CD4-positive, alpha-beta memory T cell (primary cell): ENCODE measurements at regions of chr5 and their contacts with region 1.

Region 1: GRCh38 chr5:32232441-32233219 is 58.5 kb upstream of the GOLPH3 start:
- DNase-seq: peak; percentile 65 to 69 (median 67)
- H3K4me3 ChIP-seq: no peak overlapping the region
- H3K4me3 Mint-ChIP-seq: no peak overlapping the region
- H3K27ac ChIP-seq: no peak overlapping the region
- H3K27ac Mint-ChIP-seq: peak overlapping the region in 5 of 7 donors; percentile 24 to 89 (median 73)
- H3K4me1 ChIP-seq: no peaks in the 10 kb centered on the region
- H3K4me1 Mint-ChIP-seq: peaks cover 0 to 7% (median 4%) of the 10 kb centered on the region in 4 donors
- H3K27me3 ChIP-seq: no peaks in the 10 kb centered on the region
- H3K27me3 Mint-ChIP-seq: no peaks in the 10 kb centered on the region

Region 2: DNA sequence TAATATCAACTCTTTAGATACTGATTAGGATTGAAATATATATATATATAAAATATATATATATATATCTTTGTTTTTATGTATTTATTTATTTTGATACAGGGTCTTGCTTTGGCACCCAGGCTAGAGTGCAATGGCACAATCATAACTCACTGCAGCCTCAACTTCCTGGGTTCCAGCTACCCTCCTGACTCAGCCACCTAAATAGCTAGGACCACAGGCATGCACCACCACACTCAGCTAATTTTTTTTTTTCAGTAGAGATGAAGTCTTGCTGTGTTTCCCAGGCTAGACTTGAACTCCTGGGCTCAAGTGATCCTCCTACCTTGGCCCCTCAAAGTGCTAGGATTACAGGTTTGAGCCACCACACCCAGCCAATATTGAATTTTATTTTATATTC is 1059.7 kb before region 1 on chr5:
- CTCF ChIA-PET with region 1: no interaction called
- POLR2A ChIA-PET with region 1: no interaction called
- intact Hi-C with region 1: no loop called
- DNase-seq: no peak
- H3K4me3 ChIP-seq: no peak overlapping the region
- H3K4me3 Mint-ChIP-seq: no peak overlapping the region
- H3K27ac ChIP-seq: no peak overlapping the region
- H3K27ac Mint-ChIP-seq: no peak overlapping the region
- H3K4me1 ChIP-seq: no peaks in the 10 kb centered on the region
- H3K4me1 Mint-ChIP-seq: no peaks in the 10 kb centered on the region
- H3K27me3 ChIP-seq: no peaks in the 10 kb centered on the region
- H3K27me3 Mint-ChIP-seq: no peaks in the 10 kb centered on the region

Region 3: DNA sequence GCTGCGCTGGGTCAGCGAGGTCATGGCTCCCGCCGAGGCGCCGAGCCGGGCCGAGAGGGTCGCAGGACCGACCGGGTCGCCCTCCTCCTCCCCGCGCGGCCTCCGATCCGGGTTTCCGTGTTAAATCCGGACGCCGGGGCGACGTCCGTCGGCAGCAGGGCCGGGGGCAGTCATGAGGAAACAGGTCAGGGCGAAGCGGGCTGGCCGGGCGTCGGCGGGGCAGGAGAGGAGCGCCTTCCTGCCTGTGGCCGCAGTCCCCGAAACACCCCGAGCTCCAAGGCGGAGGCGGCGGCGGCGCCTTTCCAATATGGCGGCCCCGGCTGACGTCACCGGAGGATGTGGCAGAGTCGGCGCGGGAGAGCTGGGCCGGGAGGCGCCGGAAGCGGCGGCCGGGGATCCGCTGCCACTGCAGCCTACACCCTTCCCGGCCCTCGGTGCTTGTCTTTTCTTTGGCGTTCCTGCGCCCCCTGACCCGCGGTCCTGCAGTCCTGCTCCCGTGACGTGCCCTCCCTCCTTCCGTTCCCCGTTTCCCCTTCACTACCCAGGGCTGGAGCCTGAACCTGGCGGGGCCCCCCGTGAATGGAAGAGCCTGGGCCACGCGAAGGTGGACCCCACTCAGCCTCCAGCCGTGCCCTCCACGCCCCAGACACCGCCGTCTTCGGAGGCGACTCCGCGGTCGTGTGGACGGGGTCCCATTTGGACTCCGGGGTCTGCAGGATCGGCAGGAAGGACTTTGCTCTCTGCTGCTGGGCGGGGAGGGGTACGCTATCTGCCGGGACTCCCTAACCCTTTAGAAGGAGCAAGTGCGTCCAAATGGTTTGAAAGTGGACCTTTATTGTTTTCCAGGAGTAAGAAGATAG is 58.4 kb before region 1 on chr5 and contains the start of gene GOLPH3:
- CTCF ChIA-PET with region 1: interaction called, 3 read pairs
- POLR2A ChIA-PET with region 1: interaction called, 12 read pairs
- intact Hi-C with region 1: loop called (anchors 5 kb)
- DNase-seq: peak; percentile 89 to 94 (median 91)
- H3K4me3 ChIP-seq: peak within 1 kb of the TSS; percentile 62 to 69
- H3K4me3 Mint-ChIP-seq: peak within 1 kb of the TSS; percentile 94 to 99 (median 98)
- H3K27ac ChIP-seq: peak within 1 kb of the TSS; percentile 98
- H3K27ac Mint-ChIP-seq: peak within 1 kb of the TSS; percentile 93 to 99 (median 99)
- H3K4me1 ChIP-seq: peaks cover 31% of the 10 kb centered on the region
- H3K4me1 Mint-ChIP-seq: peaks cover 24 to 52% (median 31%) of the 10 kb centered on the region in 4 donors
- H3K27me3 ChIP-seq: no peaks in the 10 kb centered on the region
- H3K27me3 Mint-ChIP-seq: peaks cover 2 to 7% of the 10 kb centered on the region in 2 donors
- total RNA-seq, gene GOLPH3: 67.4 to 74.5 TPM

Region 4: DNA sequence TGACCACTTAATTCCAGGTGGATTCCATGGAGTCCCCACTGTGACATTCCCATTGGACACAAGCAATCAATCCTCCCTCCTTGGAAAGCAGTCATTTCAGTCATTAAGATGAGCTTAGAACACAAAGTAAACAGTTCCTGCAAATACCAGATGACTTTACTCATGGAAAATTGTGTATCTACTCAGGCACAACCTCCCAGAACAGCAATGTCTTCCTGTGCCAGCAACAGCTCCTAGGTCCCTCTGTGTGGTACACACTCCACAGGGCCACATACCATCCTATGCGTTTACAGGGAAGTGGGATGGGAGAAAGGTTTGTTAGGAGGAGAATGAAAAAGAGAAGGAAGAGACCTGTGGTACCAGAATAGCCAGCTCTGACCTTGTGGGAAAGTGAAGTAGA is 26.4 kb after region 1 on chr5:
- CTCF ChIA-PET with region 1: interaction called, 14 read pairs
- POLR2A ChIA-PET with region 1: no interaction called
- intact Hi-C with region 1: no loop called
- DNase-seq: no peak
- H3K4me3 ChIP-seq: no peak overlapping the region
- H3K4me3 Mint-ChIP-seq: no peak overlapping the region
- H3K27ac ChIP-seq: no peak overlapping the region
- H3K27ac Mint-ChIP-seq: no peak overlapping the region
- H3K4me1 ChIP-seq: no peaks in the 10 kb centered on the region
- H3K4me1 Mint-ChIP-seq: peaks cover 0 to 4% (median 1%) of the 10 kb centered on the region in 4 donors
- H3K27me3 ChIP-seq: no peaks in the 10 kb centered on the region
- H3K27me3 Mint-ChIP-seq: no peaks in the 10 kb centered on the region

Region 5: DNA sequence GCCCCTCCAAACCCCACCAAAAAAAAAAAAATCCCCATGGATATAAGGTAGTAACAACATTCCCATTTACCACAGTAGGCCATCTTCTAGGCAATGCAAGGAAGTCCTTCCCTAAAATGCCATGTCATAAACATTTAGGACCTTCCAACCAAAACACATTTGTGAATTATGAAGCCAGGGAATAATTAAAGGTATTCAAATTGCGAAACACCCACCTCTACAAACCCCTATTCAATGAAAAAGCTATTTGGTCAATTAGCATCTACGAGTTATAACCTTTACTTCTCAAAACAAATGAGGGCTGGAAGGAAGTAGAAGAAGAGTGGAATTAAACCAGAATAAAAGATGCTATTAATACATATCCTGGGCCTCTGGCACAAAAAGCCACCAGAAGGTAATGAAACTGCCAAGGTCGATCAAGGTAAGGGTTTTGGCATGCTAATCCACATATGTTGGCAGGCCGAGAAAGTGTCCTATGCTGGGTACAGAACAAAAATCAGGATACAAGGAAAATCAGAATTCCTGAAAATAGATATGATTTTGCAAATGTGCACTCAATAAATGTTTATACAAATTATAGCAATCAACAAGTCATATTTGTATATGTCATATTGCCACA is 32.4 kb after region 1 on chr5:
- CTCF ChIA-PET with region 1: interaction called, 14 read pairs
- POLR2A ChIA-PET with region 1: no interaction called
- intact Hi-C with region 1: no loop called
- DNase-seq: no peak
- H3K4me3 ChIP-seq: no peak overlapping the region
- H3K4me3 Mint-ChIP-seq: no peak overlapping the region
- H3K27ac ChIP-seq: no peak overlapping the region
- H3K27ac Mint-ChIP-seq: no peak overlapping the region
- H3K4me1 ChIP-seq: no peaks in the 10 kb centered on the region
- H3K4me1 Mint-ChIP-seq: peaks cover 0 to 4% (median 1%) of the 10 kb centered on the region in 4 donors
- H3K27me3 ChIP-seq: no peaks in the 10 kb centered on the region
- H3K27me3 Mint-ChIP-seq: no peaks in the 10 kb centered on the region

Region 6: DNA sequence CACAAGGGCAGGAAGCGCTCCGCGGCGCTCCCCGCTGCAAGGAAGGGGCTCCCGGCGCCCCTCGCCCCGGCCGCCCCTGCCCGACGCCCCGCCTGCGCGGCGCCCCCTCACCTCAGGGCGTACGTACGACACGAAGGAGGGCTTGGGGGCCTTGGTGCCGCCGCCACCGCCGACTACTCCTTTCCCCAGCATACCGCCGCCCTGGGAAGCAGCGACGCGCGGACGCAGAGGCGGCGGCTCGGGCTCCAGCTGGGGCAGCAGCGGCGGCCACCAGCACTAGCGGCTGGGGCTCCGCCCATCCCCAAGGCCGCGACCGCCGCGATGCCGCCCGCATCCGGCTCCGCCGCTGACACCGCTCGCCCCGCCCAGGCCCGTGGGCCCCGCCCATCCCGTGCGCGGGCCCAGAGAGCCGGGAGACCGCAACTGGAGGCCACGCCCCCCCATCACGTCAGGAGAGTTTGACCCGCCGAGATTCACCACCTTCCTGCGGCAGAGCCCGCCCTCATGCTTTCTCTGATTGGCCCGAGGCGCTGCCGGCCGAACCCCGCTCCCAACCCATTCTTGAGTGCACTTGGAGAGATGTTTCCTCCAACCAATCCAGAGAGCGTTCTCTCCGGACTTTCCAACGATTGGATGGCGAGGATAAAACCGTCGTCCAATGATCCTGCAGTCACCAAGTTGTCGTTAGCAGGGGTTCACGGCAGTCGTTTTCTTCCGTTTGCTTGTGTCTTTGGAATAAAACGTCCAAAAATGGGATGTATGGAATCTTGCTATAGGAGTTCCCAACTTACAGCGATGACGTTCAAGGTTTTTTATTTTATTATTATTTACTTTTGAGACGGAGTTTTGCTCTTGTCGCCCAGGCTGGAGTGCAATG is 80.3 kb after region 1 on chr5 and contains the start of gene MTMR12:
- CTCF ChIA-PET with region 1: interaction called, 4 read pairs
- POLR2A ChIA-PET with region 1: no interaction called
- intact Hi-C with region 1: loop called (anchors 5 kb)
- DNase-seq: peak; percentile 99 to 100 (median 100)
- H3K4me3 ChIP-seq: peak within 1 kb of the TSS; percentile 59 to 77
- H3K4me3 Mint-ChIP-seq: peak within 1 kb of the TSS; percentile 91 to 98 (median 94)
- H3K27ac ChIP-seq: peak within 1 kb of the TSS; percentile 67
- H3K27ac Mint-ChIP-seq: peak within 1 kb of the TSS; percentile 93 to 98 (median 97)
- H3K4me1 ChIP-seq: peaks cover 28% of the 10 kb centered on the region
- H3K4me1 Mint-ChIP-seq: peaks cover 24 to 50% (median 33%) of the 10 kb centered on the region in 4 donors
- H3K27me3 ChIP-seq: no peaks in the 10 kb centered on the region
- H3K27me3 Mint-ChIP-seq: no peaks in the 10 kb centered on the region
- total RNA-seq, gene MTMR12: 26.3 to 26.4 TPM

Region 7: DNA sequence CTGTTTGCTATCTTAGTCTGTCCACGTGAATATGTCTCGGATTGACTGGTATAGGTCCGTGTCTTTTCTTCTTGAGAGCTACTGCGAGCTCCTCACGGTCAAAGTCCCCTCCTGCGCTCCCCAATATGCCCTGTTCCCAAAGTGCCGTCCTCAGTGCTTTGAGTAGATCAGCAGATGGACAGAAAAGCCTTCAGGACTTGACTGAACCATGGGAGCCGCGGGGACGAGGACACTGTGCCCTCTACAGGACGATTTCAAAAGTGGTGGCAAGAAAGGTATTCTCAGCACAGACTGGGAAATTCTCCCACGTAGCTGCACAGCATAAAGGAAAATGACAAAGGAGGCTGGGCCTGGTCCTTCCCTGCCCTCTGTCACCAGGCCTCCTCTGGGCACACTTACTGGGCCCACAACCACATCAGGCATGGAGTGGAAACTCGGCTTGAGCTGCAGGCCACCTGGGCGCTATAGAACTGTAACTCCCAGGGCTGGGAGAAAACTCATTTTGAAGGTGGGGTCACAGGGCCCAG is 96.7 kb after region 1 on chr5:
- CTCF ChIA-PET with region 1: interaction called, 250 read pairs
- POLR2A ChIA-PET with region 1: interaction called, 4 read pairs
- intact Hi-C with region 1: no loop called
- DNase-seq: peak in 4 of 5 donors; percentile 39 to 57 (median 48)
- H3K4me3 ChIP-seq: no peak overlapping the region
- H3K4me3 Mint-ChIP-seq: no peak overlapping the region
- H3K27ac ChIP-seq: no peak overlapping the region
- H3K27ac Mint-ChIP-seq: peak overlapping the region in 2 of 7 donors; percentile 72 to 79
- H3K4me1 ChIP-seq: no peaks in the 10 kb centered on the region
- H3K4me1 Mint-ChIP-seq: peaks cover 0 to 4% (median 2%) of the 10 kb centered on the region in 4 donors
- H3K27me3 ChIP-seq: no peaks in the 10 kb centered on the region
- H3K27me3 Mint-ChIP-seq: peaks cover 0 to 3% of the 10 kb centered on the region in 2 donors

Region 8: DNA sequence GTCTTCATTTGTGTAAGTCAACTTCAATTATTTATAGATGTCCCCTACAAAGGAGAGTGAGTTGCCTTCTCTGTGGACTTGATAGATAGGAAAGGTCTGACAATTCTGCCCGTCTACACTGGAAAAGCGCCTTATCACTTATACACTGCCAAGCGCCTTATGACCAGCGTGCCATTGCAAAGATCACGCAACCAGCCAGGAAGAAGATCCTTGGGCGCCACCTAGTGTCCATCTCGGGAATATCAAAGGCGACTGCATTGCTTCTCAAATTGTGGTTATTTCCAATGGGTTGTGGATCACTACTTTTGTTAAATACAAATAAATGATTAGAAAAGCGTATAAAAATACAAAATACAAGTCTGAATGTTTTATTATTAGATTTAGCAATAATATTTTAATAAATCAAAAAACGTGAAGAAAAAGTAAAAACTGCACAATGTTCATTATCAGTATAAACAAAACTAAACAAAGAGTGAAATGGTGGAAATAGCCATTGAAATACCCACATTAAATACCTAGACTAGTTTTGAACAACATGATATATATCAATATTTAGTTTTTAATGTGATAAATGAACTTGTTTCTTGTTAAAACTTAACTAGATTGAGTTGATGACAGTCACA is 380.5 kb after region 1 on chr5:
- CTCF ChIA-PET with region 1: interaction called, 30 read pairs
- POLR2A ChIA-PET with region 1: interaction called, 4 read pairs
- intact Hi-C with region 1: loop called (anchors 1 kb)
- DNase-seq: peak; percentile 72 to 79 (median 76)
- H3K4me3 ChIP-seq: no peak overlapping the region
- H3K4me3 Mint-ChIP-seq: no peak overlapping the region
- H3K27ac ChIP-seq: no peak overlapping the region
- H3K27ac Mint-ChIP-seq: peak overlapping the region in 2 of 7 donors; percentile 7 to 65
- H3K4me1 ChIP-seq: no peaks in the 10 kb centered on the region
- H3K4me1 Mint-ChIP-seq: peaks cover 2 to 24% (median 14%) of the 10 kb centered on the region in 4 donors
- H3K27me3 ChIP-seq: no peaks in the 10 kb centered on the region
- H3K27me3 Mint-ChIP-seq: no peaks in the 10 kb centered on the region

Region 9: DNA sequence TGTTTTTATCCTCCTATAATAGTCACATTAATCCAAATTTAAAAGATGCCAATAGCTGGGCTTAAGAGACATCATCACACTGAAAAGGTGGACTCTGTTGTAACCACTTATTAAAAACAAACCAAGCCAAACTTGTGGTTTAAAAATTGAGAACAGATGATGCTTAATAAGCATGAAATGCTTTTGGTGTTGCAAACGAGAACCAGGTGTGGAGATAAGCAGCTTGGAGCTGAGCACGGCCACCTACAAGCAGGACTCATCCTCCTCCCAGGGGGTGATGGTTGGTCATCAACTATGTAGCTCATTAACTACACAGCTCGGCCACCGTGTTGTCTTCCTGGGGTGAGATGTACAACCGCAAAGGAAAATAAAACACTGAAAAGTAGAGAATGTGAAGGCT is 632.8 kb after region 1 on chr5:
- CTCF ChIA-PET with region 1: no interaction called
- POLR2A ChIA-PET with region 1: no interaction called
- intact Hi-C with region 1: no loop called
- DNase-seq: no peak
- H3K4me3 ChIP-seq: no peak overlapping the region
- H3K4me3 Mint-ChIP-seq: no peak overlapping the region
- H3K27ac ChIP-seq: no peak overlapping the region
- H3K27ac Mint-ChIP-seq: no peak overlapping the region
- H3K4me1 ChIP-seq: no peaks in the 10 kb centered on the region
- H3K4me1 Mint-ChIP-seq: no peaks in the 10 kb centered on the region
- H3K27me3 ChIP-seq: no peaks in the 10 kb centered on the region
- H3K27me3 Mint-ChIP-seq: no peaks in the 10 kb centered on the region